ENCODE measurements at regions of chr6 and their contacts with region 1.

Region 1: GRCh38 chr6:87209812-87210211 is 54.4 kb downstream of the ZNF292 start:
- DNase-seq: no peak
- ATAC-seq: no peak
- H3K4me3 ChIP-seq: no peak overlapping the region
- H3K4me3 Mint-ChIP-seq: no peak overlapping the region
- H3K27ac ChIP-seq: no peak overlapping the region
- H3K27ac Mint-ChIP-seq: no peak overlapping the region
- H3K4me1 ChIP-seq: peaks cover 10 to 19% of the 10 kb centered on the region in 2 donors
- H3K4me1 Mint-ChIP-seq: peaks cover 67% of the 10 kb centered on the region
- H3K27me3 ChIP-seq: no peaks in the 10 kb centered on the region
- H3K27me3 Mint-ChIP-seq: no peaks in the 10 kb centered on the region
- CTCF ChIP-seq: no peak

Region 2: DNA sequence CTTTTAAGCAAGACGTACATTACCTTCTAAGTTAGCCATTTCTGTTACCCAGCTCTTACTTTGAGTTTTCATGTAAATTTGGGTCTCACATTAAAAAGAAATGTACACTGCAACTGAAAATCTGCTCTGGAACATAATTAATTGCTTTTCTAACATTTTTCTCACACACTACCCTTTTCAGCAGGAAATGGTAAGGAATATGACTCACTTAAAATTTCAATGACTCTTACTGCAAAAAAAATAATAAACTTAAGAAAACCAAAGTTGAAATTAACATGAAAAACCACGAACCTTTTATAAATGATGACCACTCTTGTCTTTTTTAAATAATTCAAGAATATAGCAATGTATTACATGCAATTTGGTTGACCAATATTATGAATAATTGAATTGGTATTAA is 116.2 kb before region 1 on chr6:
- CTCF ChIA-PET with region 1: no interaction called
- POLR2A ChIA-PET with region 1: no interaction called
- intact Hi-C with region 1: no loop called
- DNase-seq: no peak
- ATAC-seq: no peak
- H3K4me3 ChIP-seq: no peak overlapping the region
- H3K4me3 Mint-ChIP-seq: no peak overlapping the region
- H3K27ac ChIP-seq: no peak overlapping the region
- H3K27ac Mint-ChIP-seq: no peak overlapping the region
- H3K4me1 ChIP-seq: no peaks in the 10 kb centered on the region
- H3K4me1 Mint-ChIP-seq: no peaks in the 10 kb centered on the region
- H3K27me3 ChIP-seq: no peaks in the 10 kb centered on the region
- H3K27me3 Mint-ChIP-seq: no peaks in the 10 kb centered on the region
- CTCF ChIP-seq: no peak

Region 3: DNA sequence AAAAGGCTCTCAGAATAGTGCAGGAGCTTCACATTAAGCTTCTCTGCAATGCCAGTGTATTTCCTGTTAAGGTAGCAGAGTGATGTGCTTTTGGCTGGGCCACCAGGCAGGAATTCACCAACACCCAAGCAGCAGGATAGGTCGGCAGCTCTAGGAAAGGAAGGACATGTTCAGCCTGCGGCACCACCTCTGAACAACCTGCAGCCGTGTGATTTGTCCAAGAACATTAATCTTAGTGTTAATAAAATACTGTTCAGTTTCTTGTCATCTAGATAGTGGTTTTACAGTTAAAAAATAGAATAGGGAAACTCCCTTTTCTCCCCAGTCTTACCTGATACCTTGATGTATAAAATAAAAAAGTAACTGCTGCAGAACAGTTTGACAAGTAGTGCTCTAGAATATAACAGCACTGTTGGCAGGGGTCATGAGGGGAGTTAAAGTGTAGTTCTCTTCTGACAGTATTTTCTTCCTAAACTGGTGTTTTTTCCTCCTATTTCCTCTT is 35.7 kb before region 1 on chr6:
- CTCF ChIA-PET with region 1: no interaction called
- POLR2A ChIA-PET with region 1: no interaction called
- intact Hi-C with region 1: loop called (anchors 5 kb)
- DNase-seq: no peak
- ATAC-seq: no peak
- H3K4me3 ChIP-seq: no peak overlapping the region
- H3K4me3 Mint-ChIP-seq: peak overlapping the region; percentile 51
- H3K27ac ChIP-seq: peak overlapping the region in 1 of 2 donors; percentile 51
- H3K27ac Mint-ChIP-seq: peak overlapping the region; percentile 28
- H3K4me1 ChIP-seq: peaks cover 19 to 36% of the 10 kb centered on the region in 2 donors
- H3K4me1 Mint-ChIP-seq: peaks cover 71% of the 10 kb centered on the region
- H3K27me3 ChIP-seq: no peaks in the 10 kb centered on the region
- H3K27me3 Mint-ChIP-seq: no peaks in the 10 kb centered on the region
- CTCF ChIP-seq: no peak

Region 4: DNA sequence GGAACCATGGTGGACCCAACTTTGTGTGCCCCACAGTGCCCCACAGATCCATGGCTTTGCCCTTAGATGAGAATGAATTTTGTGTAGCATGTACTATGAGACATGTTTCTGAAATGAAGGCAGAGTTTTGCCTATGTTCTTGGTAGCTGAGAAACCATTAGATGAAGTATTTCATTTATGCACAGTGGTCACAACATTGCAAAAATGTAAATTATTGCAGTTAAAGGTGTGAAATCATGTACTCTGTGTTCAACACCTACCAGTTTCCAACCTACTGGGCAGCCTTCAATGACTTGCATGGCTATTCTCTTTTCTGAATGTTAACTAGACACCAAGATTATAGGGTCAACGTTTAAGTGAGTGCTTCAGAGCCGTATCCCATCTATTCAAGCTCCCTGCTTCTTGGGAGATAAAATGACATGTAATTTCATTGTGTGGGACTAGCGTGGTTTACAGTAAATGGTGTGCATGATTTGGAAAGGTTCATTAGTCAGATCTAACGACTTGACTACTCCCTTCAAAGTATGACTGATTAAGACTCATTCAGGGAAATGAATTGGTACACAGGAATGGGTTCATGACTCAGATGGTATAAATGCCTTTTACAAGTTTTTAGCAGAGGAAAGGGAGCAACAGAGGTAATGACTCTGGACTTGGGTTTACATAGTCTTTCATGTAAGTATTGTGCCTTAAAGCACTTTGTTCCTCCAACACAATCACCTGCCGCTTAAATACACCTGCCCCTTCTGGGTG is 598.4 kb after region 1 on chr6:
- CTCF ChIA-PET with region 1: no interaction called
- POLR2A ChIA-PET with region 1: no interaction called
- intact Hi-C with region 1: no loop called
- DNase-seq: no peak
- ATAC-seq: no peak
- H3K4me3 ChIP-seq: no peak overlapping the region
- H3K4me3 Mint-ChIP-seq: no peak overlapping the region
- H3K27ac ChIP-seq: no peak overlapping the region
- H3K27ac Mint-ChIP-seq: no peak overlapping the region
- H3K4me1 ChIP-seq: peaks cover 18 to 29% of the 10 kb centered on the region in 2 donors
- H3K4me1 Mint-ChIP-seq: peaks cover 25% of the 10 kb centered on the region
- H3K27me3 ChIP-seq: no peaks in the 10 kb centered on the region
- H3K27me3 Mint-ChIP-seq: no peaks in the 10 kb centered on the region
- CTCF ChIP-seq: no peak

Region 5: GRCh38 chr6:88268508-88268907 is 1058.7 kb after region 1 on chr6:
- CTCF ChIA-PET with region 1: no interaction called
- POLR2A ChIA-PET with region 1: no interaction called
- intact Hi-C with region 1: no loop called
- DNase-seq: no peak
- ATAC-seq: no peak
- H3K4me3 ChIP-seq: no peak overlapping the region
- H3K4me3 Mint-ChIP-seq: no peak overlapping the region
- H3K27ac ChIP-seq: no peak overlapping the region
- H3K27ac Mint-ChIP-seq: no peak overlapping the region
- H3K4me1 ChIP-seq: no peaks in the 10 kb centered on the region
- H3K4me1 Mint-ChIP-seq: no peaks in the 10 kb centered on the region
- H3K27me3 ChIP-seq: peaks cover 0 to 16% (median 0%) of the 10 kb centered on the region in 4 experiments
- H3K27me3 Mint-ChIP-seq: peaks cover 28% of the 10 kb centered on the region
- CTCF ChIP-seq: no peak